A549 (cell line): ENCODE measurements at regions of chr20 and their contacts with region 1.

Region 1: GRCh38 chr20:1764136-1765033 is 106.8 kb upstream of the SIRPG start:
- DNase-seq: peak; percentile 80 to 85
- ATAC-seq: peak; percentile 95 to 98
- H3K4me3 ChIP-seq: no peak overlapping the region
- H3K27ac ChIP-seq: no peak overlapping the region
- H3K4me1 ChIP-seq: peaks cover 11% of the 10 kb centered on the region
- CTCF ChIP-seq: peak; percentile 88
- EP300 ChIP-seq: no peak
- POLR2A ChIP-seq: no peak
- RAD21 ChIP-seq: peak; percentile 87 to 91

Region 2: GRCh38 chr20:1790386-1790785 is 26.0 kb after region 1 on chr20:
- CTCF ChIA-PET with region 1: interaction called, 10 read pairs
- POLR2A ChIA-PET with region 1: no interaction called
- DNase-seq: no peak
- ATAC-seq: peak in 1 of 2 experiments; percentile 14; a peak in 2 of 6 replicates
- H3K4me3 ChIP-seq: no peak overlapping the region
- H3K27ac ChIP-seq: no peak overlapping the region
- H3K4me1 ChIP-seq: no peaks in the 10 kb centered on the region
- CTCF ChIP-seq: no peak
- EP300 ChIP-seq: no peak
- POLR2A ChIP-seq: no peak
- RAD21 ChIP-seq: no peak

Region 3: GRCh38 chr20:1870792-1871550 is 106.6 kb after region 1 on chr20:
- CTCF ChIA-PET with region 1: interaction called, 10 read pairs
- POLR2A ChIA-PET with region 1: no interaction called
- DNase-seq: no peak
- ATAC-seq: no peak
- H3K4me3 ChIP-seq: no peak overlapping the region
- H3K27ac ChIP-seq: no peak overlapping the region
- H3K4me1 ChIP-seq: peaks cover 25% of the 10 kb centered on the region
- CTCF ChIP-seq: no peak
- EP300 ChIP-seq: no peak
- POLR2A ChIP-seq: no peak
- RAD21 ChIP-seq: no peak

Region 4: DNA sequence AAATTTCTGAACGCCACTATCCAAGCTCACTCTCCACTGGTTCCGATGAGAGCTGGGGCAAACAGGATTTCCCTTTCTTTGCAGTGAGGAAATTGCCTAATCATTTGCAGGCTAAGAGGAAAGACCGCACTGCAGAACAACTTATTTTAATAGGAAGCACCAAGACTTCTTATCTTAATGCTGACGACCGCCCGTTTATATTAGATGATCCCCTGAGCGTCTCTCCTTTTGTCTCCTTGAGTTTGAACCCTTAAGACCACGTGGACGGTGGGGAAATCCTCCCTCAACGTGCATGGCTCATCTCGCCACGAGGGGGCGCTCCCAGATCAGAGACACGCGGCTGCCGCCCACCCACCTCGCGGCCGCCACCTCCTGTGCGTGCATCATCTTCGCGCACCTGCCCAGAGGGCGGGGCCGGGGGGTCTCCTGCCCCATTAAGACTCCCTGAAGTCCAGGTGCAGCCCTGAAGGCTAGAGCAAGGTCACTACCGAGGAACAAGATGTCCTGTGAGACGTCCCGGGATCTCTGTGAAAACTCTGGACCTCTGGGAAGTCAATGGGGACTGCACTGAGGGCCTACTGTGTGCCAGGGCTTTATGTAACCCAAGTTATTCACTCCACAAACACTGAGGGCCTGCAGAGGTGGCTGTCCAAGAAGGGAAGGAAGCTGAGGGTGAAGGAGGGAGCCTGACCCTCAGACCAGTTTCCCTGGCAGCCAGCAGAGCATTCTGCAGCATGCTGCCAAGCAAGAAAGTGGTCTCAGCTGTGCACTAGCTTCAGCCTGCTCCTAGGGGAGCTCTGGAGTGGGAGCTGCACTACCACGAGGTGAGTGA is 201.4 kb after region 1 on chr20:
- CTCF ChIA-PET with region 1: interaction called, 16 read pairs
- POLR2A ChIA-PET with region 1: no interaction called
- DNase-seq: peak; percentile 80 to 84
- ATAC-seq: peak; percentile 81 to 93
- H3K4me3 ChIP-seq: no peak overlapping the region
- H3K27ac ChIP-seq: peak overlapping the region; percentile 24 to 31; a peak in 3 of 6 replicates
- H3K4me1 ChIP-seq: 0 out of 3 replicates have a peak, but pooled peaks cover 6% of the 10 kb centered on the region
- CTCF ChIP-seq: peak; percentile 99
- EP300 ChIP-seq: no peak
- POLR2A ChIP-seq: no peak
- RAD21 ChIP-seq: peak; percentile 93 to 95